Cardiac septum (tissue), 1 donor: ENCODE measurements at regions of chr14 and their contacts with region 1.

Region 1: GRCh38 chr14:20970983-20971704 is 15.9 kb downstream of the RNASE2 start:
- DNase-seq: peak; percentile 95

Region 2: GRCh38 chr14:20989572-20990551 is 18.7 kb after region 1 on chr14 and contains the start of gene METTL17:
- intact Hi-C with region 1: loop called (anchors 2 kb)
- DNase-seq: peak; percentile 93
- total RNA-seq, gene METTL17: 34.6 TPM

Region 3: DNA sequence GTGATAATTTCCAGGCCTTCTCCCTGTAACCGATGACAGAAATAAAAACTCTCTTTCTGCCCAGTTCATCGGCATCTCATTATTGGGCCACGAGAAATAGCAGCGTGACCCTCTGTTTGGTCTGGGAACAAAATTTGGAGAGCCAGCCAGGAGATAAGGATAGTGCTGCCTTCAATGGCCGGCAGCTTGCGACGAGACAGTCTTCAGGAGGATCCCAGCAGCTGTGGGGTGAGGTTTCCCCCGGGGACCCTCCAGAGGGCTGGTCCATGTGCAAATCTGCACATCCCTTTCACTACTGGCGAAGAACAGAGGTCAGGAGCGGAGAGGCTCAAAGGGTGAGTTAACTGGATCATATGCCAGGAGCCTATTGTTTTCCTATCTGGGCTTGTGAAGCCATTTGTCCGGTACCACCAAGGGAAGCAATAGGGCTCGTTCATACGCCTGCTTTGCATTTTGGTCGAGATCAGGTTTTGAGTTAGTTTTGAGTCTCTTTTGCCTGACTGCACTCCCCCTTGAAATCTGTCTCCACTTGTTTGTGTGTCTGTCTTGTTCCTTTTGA is 32.7 kb after region 1 on chr14:
- intact Hi-C with region 1: loop called (anchors 1 kb)
- DNase-seq: no peak

Region 4: GRCh38 chr14:21087294-21088091 is 116.3 kb after region 1 on chr14:
- intact Hi-C with region 1: no loop called
- DNase-seq: peak; percentile 76